ENCODE measurements at regions of chrX and their contacts with region 1.

Region 1: DNA sequence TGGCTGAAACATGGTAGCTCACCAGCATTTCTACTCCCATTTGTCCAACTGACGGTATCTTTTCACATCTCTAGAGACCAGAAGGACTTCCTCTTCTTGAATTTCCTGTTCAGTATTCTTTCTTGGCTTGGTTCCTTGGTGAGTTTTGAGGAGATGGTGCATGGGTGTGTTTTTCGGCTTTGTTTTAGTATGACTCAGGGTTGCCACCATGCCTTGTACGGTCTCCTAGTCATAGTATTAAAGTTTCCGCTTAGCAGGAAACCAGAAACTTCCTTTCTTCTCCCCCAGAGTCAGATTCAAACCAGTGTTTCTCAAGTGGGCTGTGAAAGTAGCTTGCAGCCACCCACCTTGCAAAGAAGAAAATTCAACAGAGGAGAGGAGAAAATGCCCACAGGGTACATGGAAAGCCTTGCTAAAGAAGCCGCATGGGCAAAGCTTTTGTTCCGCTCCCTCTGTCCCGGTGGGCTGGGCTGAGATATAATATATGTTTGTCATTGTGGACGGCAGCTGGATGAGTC is 5.7 kb downstream of the CD99 start:
- DNase-seq: peak; percentile 55 to 97
- H3K4me3 ChIP-seq: peak overlapping the region; percentile 42; the same call in 1 of the 2 replicates
- H3K27ac ChIP-seq: peak overlapping the region; percentile 97
- H3K4me1 ChIP-seq: peaks cover 57% of the 10 kb centered on the region
- H3K27me3 ChIP-seq: no peaks in the 10 kb centered on the region
- CTCF ChIP-seq: no peak

Region 2: DNA sequence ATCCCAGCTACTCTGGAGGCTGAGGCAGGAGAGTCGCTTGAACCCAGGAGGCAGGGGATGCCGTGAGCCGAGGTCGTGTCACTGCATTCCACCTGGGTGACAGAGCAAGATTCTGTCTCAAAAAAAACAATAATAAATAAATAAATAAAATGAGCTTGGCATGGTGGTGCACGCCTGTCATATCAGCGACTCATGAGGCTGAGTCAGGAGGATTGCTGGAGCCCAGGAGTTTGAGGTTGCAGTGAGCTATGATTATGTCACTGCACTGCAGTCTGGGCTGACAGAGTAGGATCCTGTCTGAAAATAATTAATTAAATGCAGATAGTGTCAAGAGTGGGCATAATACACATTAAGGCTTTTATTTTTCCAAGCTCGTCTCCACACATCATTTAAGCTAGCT is 273.5 kb before region 1 on chrX:
- CTCF ChIA-PET with region 1: no interaction called
- POLR2A ChIA-PET with region 1: no interaction called
- intact Hi-C with region 1: no loop called
- DNase-seq: no peak
- H3K4me3 ChIP-seq: no peak overlapping the region
- H3K27ac ChIP-seq: no peak overlapping the region
- H3K4me1 ChIP-seq: no peaks in the 10 kb centered on the region
- H3K27me3 ChIP-seq: no peaks in the 10 kb centered on the region
- CTCF ChIP-seq: no peak

Region 3: GRCh38 chrX:2677764-2678163 is 19.0 kb before region 1 on chrX:
- CTCF ChIA-PET with region 1: no interaction called
- POLR2A ChIA-PET with region 1: no interaction called
- intact Hi-C with region 1: no loop called
- DNase-seq: peak; percentile 71 to 74
- H3K4me3 ChIP-seq: no peak overlapping the region
- H3K27ac ChIP-seq: no peak overlapping the region
- H3K4me1 ChIP-seq: no peaks in the 10 kb centered on the region; the same call in 1 of the 2 replicates
- H3K27me3 ChIP-seq: no peaks in the 10 kb centered on the region
- CTCF ChIP-seq: no peak

Region 4: GRCh38 chrX:2707334-2707760 is 10.6 kb after region 1 on chrX:
- CTCF ChIA-PET with region 1: no interaction called
- POLR2A ChIA-PET with region 1: no interaction called
- intact Hi-C with region 1: loop called (anchors 1 kb)
- DNase-seq: peak; percentile 82 to 96
- H3K4me3 ChIP-seq: no peak overlapping the region
- H3K27ac ChIP-seq: peak overlapping the region; percentile 87
- H3K4me1 ChIP-seq: peaks cover 52% of the 10 kb centered on the region
- H3K27me3 ChIP-seq: no peaks in the 10 kb centered on the region
- CTCF ChIP-seq: no peak

Region 5: GRCh38 chrX:2801223-2801622 is 104.5 kb after region 1 on chrX:
- CTCF ChIA-PET with region 1: no interaction called
- POLR2A ChIA-PET with region 1: no interaction called
- intact Hi-C with region 1: loop called (anchors 2 kb)
- DNase-seq: no peak
- H3K4me3 ChIP-seq: no peak overlapping the region
- H3K27ac ChIP-seq: no peak overlapping the region
- H3K4me1 ChIP-seq: peaks cover 37% of the 10 kb centered on the region
- H3K27me3 ChIP-seq: no peaks in the 10 kb centered on the region
- CTCF ChIP-seq: no peak

Region 6: DNA sequence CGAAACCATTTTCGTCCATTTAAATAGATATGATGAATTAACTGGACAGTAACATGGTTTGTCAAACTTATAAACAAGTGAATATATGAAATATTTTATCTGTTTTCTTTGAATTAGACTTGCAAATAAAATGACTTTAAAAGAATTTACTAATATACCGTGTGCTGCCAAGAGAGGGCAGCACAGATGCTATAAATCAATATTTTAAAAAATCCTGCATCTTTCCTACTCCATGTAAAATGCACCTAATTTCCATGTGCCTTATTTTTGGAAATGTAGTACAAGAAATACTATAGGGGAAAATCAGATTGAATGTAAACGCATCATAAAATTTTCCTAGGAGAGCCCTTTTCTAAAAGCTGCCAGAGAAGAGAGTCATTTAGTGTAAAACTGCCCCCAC is 954.5 kb after region 1 on chrX:
- CTCF ChIA-PET with region 1: no interaction called
- POLR2A ChIA-PET with region 1: no interaction called
- intact Hi-C with region 1: no loop called
- DNase-seq: no peak
- H3K4me3 ChIP-seq: no peak overlapping the region
- H3K27ac ChIP-seq: no peak overlapping the region
- H3K4me1 ChIP-seq: no peaks in the 10 kb centered on the region
- H3K27me3 ChIP-seq: no peaks in the 10 kb centered on the region
- CTCF ChIP-seq: peak; percentile 85

Measured in PC-9 (cell line).